Activated CD8-positive, alpha-beta T cell treated with anti-CD3 and anti-CD28 coated beads, Interleukin-2, amount 10 ng/mL, durations not matched to agents 7 days and 5 days (primary cell): ENCODE measurements at regions of chr14 and their contacts with region 1.

Region 1: GRCh38 chr14:103562429-103563225 is at the starts of genes BAG5 and COA8:
- DNase-seq: peak; percentile 90
- ATAC-seq: peak; percentile 81
- H3K4me3 Mint-ChIP-seq: peak within 1 kb of the TSS; percentile 91
- H3K27ac Mint-ChIP-seq: peak within 1 kb of the TSS; percentile 93
- H3K4me1 Mint-ChIP-seq: peaks cover 55% of the 10 kb centered on the region
- H3K27me3 Mint-ChIP-seq: no peaks in the 10 kb centered on the region
- total RNA-seq, gene BAG5: 31.1 to 33.2 TPM
- total RNA-seq, gene COA8: 28.3 to 34.3 TPM

Region 2: GRCh38 chr14:103382376-103382775 is 180.3 kb before region 1 on chr14:
- CTCF ChIA-PET with region 1: no interaction called
- POLR2A ChIA-PET with region 1: no interaction called
- DNase-seq: no peak
- ATAC-seq: no peak
- H3K4me3 Mint-ChIP-seq: no peak overlapping the region
- H3K27ac Mint-ChIP-seq: no peak overlapping the region
- H3K4me1 Mint-ChIP-seq: peaks cover 18% of the 10 kb centered on the region
- H3K27me3 Mint-ChIP-seq: peaks cover 12% of the 10 kb centered on the region

Region 3: GRCh38 chr14:103528587-103529382 is 33.8 kb before region 1 on chr14 and contains the start of gene TRMT61A:
- CTCF ChIA-PET with region 1: interaction called, 3 read pairs
- POLR2A ChIA-PET with region 1: interaction called, 16 read pairs
- DNase-seq: peak; percentile 81
- ATAC-seq: peak; percentile 89
- H3K4me3 Mint-ChIP-seq: peak within 1 kb of the TSS; percentile 95
- H3K27ac Mint-ChIP-seq: peak within 1 kb of the TSS; percentile 97
- H3K4me1 Mint-ChIP-seq: peaks cover 46% of the 10 kb centered on the region
- H3K27me3 Mint-ChIP-seq: peaks cover 4% of the 10 kb centered on the region
- total RNA-seq, gene TRMT61A: 8.5 to 8.8 TPM

Region 4: GRCh38 chr14:103628684-103629502 is 66.3 kb after region 1 on chr14 and contains the start of gene KLC1:
- CTCF ChIA-PET with region 1: interaction called, 4 read pairs
- POLR2A ChIA-PET with region 1: interaction called, 10 read pairs
- DNase-seq: peak; percentile 87
- ATAC-seq: peak; percentile 76
- H3K4me3 Mint-ChIP-seq: peak within 1 kb of the TSS; percentile 87
- H3K27ac Mint-ChIP-seq: peak within 1 kb of the TSS; percentile 92
- H3K4me1 Mint-ChIP-seq: peaks cover 46% of the 10 kb centered on the region
- H3K27me3 Mint-ChIP-seq: peaks cover 3% of the 10 kb centered on the region
- total RNA-seq, gene KLC1: 137 to 140 TPM